ENCODE measurements at regions of chr15 and their contacts with region 1.

Region 1: GRCh38 chr15:49122541-49123062 is 32.8 kb downstream of the COPS2 start:
- DNase-seq: no peak
- ATAC-seq: no peak
- H3K4me3 ChIP-seq: no peak overlapping the region
- H3K27ac ChIP-seq: no peak overlapping the region
- H3K4me1 ChIP-seq: no peaks in the 10 kb centered on the region
- H3K27me3 ChIP-seq: no peaks in the 10 kb centered on the region

Region 2: DNA sequence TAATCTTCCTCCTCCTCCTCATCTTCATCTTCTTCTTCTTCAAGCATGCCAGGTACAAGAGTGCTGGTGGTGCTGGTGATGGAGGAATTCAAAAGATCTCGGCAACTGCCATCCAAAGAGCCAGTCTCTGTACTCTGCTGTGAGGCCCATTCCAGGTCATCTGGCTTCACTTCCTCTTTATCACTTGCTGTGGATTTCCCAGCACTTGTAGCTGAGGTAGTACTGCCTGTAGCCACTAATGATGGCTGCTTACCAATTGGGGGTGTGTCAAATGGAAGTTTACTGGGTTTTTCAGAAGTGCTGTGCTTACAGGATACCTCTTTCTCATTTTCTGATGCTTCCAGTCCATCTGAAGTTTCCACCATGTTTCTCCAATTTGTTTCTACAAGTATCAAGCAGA is 130.1 kb before region 1 on chr15:
- intact Hi-C with region 1: loop called in 1 of 2 experiments (anchors 10 kb)
- DNase-seq: no peak
- ATAC-seq: no peak
- H3K4me3 ChIP-seq: no peak overlapping the region
- H3K27ac ChIP-seq: no peak overlapping the region
- H3K4me1 ChIP-seq: no peaks in the 10 kb centered on the region
- H3K27me3 ChIP-seq: no peaks in the 10 kb centered on the region

Region 3: GRCh38 chr15:49082960-49083359 is 39.6 kb before region 1 on chr15:
- intact Hi-C with region 1: no loop called
- DNase-seq: no peak
- ATAC-seq: no peak
- H3K4me3 ChIP-seq: no peak overlapping the region
- H3K27ac ChIP-seq: no peak overlapping the region
- H3K4me1 ChIP-seq: no peaks in the 10 kb centered on the region
- H3K27me3 ChIP-seq: no peaks in the 10 kb centered on the region

Measured in aorta (tissue), 5 donors.